ENCODE measurements at regions of chr15 and their contacts with region 1.

Region 1: DNA sequence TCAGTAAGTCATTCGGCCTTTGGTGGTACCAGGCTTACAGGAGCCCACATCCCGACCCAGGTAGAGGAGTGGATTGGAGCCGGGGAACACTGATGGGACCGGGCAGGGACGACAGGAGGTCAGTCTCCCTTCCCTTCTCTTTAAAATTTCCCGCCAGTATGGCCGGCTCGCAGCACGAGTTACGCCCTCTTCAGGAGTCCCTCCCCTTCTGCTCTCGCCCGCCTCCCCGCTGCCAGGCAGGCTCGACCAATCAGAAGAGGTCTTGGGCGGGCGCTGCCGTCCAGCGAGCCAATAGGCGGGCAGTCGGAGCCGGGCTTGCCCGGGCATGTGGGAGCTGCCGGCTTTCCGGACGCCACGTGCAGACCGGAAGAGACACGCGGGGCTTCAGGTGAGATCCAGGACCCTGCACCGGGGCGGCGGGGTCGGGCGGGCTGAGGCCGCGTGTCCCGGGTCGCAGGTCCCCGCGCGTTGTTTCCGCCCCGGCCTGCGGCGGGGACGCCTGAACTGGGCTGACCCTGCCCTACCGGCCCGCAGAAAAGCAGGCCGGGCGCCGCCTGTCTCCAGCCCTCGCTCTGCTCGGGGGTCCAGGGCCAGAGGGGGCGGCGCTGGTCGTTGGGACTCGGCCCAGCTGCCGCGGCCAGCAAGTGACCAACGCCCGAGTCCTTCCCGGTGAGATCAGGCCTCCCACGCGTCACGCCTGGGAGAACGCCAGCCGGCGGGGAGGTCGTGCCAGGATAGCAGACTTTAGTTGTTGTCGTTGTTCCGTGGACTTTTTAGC is at the start of gene AEN:
- DNase-seq: peak; percentile 92 to 96 (median 95)
- ATAC-seq: peak; percentile 94
- H3K4me3 ChIP-seq: peak within 1 kb of the TSS; percentile 76
- H3K4me3 Mint-ChIP-seq: peak within 1 kb of the TSS; percentile 84 to 97 (median 90)
- H3K27ac ChIP-seq: peak within 1 kb of the TSS; percentile 90
- H3K27ac Mint-ChIP-seq: peak within 1 kb of the TSS; percentile 81 to 100 (median 94)
- H3K4me1 ChIP-seq: peaks cover 33 to 36% of the 10 kb centered on the region in 2 donors
- H3K4me1 Mint-ChIP-seq: peaks cover 23 to 49% (median 44%) of the 10 kb centered on the region in 7 donors
- H3K27me3 ChIP-seq: no peaks in the 10 kb centered on the region
- H3K27me3 Mint-ChIP-seq: peaks cover 0 to 7% (median 0%) of the 10 kb centered on the region in 5 donors
- total RNA-seq, gene AEN: 29.6 to 52.1 (median 44.2) TPM

Region 2: DNA sequence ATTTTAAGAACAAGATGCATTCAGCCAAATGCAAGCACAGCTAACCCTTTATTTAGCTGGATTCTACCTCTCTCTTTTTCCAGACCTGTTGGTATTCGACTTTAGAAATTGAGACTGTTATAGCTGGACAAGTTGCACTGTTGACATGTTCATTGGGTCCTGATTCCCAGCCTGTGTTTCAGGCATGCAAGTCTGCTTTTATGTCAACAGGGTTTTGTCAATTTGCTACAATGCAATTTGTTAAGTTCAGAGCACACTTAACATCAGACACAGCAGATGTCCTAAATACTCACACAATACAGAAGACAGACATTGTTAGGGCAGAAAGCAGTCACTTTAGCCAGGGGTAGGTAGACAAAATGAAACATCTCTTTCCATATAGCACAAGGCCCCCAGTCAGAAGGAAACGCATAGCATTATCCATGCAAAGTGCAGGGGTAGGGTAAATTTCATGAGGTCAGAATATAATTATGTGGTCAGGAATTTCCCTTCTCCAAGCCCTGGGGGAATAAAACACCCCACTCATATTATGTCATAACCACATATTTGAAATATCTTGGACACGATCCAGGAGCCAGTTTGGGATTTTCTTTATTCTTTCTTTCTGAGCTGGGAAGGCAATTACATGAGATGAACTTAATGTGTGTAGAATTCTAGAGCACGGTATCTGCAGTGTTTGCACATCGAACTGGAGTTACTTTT is 868.8 kb before region 1 on chr15:
- CTCF ChIA-PET with region 1: no interaction called
- POLR2A ChIA-PET with region 1: no interaction called
- intact Hi-C with region 1: no loop called
- DNase-seq: no peak
- ATAC-seq: no peak
- H3K4me3 ChIP-seq: no peak overlapping the region
- H3K4me3 Mint-ChIP-seq: no peak overlapping the region
- H3K27ac ChIP-seq: no peak overlapping the region
- H3K27ac Mint-ChIP-seq: no peak overlapping the region
- H3K4me1 ChIP-seq: no peaks in the 10 kb centered on the region
- H3K4me1 Mint-ChIP-seq: peaks cover 0 to 14% (median 3%) of the 10 kb centered on the region in 7 donors
- H3K27me3 ChIP-seq: no peaks in the 10 kb centered on the region
- H3K27me3 Mint-ChIP-seq: peaks cover 0 to 10% (median 0%) of the 10 kb centered on the region in 5 donors

Region 3: DNA sequence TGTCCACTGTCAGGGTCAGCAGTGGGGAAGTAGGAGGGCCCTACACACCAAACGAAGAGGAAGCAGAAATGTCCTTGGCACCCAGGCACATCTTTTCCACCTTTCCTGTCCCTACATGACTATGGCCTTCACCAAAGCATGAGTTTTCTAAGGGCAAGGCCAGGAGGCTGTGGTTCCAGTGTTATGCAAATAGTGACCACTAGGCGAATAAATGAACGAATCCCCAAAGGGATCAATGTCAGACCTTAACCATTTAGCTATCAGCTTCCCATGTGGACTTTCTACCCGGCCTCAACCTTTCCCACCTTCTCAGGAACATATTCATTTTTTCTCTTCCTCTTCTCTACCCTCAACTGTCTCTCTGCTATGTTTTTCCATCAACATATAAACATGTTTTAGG is 427.8 kb before region 1 on chr15:
- CTCF ChIA-PET with region 1: no interaction called
- POLR2A ChIA-PET with region 1: no interaction called
- intact Hi-C with region 1: no loop called
- DNase-seq: no peak
- ATAC-seq: no peak
- H3K4me3 ChIP-seq: no peak overlapping the region
- H3K4me3 Mint-ChIP-seq: no peak overlapping the region
- H3K27ac ChIP-seq: no peak overlapping the region
- H3K27ac Mint-ChIP-seq: no peak overlapping the region
- H3K4me1 ChIP-seq: no peaks in the 10 kb centered on the region
- H3K4me1 Mint-ChIP-seq: no peaks in the 10 kb centered on the region
- H3K27me3 ChIP-seq: no peaks in the 10 kb centered on the region
- H3K27me3 Mint-ChIP-seq: peaks cover 0 to 27% (median 21%) of the 10 kb centered on the region in 5 donors

Region 4: DNA sequence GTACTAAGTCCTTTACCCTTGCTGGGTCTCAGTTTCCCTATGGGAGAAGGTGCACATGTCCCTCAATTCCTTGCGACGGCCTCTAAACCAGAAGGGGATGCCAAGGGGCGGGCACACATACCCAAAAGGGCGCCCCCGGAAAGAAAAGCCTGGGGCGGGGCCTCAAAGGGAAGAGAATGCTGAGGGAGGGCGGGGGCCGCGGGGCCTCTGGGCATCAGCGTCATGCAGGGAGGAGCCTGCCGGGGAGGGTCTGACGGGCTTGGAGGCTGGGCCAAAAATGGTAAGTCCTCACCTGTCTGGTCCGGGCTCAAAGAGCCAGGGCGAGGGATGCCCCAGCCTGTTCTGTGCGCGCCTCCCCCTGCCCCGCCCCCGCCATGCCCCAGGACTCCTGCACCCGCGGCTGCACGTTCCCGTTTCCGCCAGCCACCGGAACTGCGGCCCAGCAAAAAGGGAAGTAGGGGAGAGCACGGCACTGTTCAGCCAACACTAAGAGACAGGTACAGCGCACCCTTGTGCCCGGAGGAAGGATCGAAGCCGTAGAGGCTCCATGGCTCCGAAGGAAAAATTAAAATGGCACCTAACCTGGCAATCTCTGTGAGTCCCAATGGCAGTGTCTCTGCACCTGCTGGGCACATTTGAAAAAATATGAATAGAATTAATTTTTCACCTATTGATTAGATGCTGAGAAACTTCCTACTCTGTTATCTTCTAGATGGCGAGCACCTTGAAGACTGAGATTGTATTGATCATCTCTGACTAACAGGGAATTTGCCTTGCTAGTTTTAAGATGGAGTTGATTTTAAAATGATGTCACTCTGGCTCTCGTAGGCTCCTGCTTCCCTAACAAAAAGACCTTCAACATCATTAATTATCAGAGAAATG is 74.7 kb before region 1 on chr15 and contains the start of gene DET1:
- CTCF ChIA-PET with region 1: no interaction called
- POLR2A ChIA-PET with region 1: no interaction called
- intact Hi-C with region 1: loop called (anchors 1 kb)
- DNase-seq: peak; percentile 75 to 94 (median 92)
- ATAC-seq: peak; percentile 97
- H3K4me3 ChIP-seq: peak within 1 kb of the TSS; percentile 66
- H3K4me3 Mint-ChIP-seq: peak within 1 kb of the TSS; percentile 80 to 96 (median 90)
- H3K27ac ChIP-seq: peak within 1 kb of the TSS; percentile 81
- H3K27ac Mint-ChIP-seq: peak within 1 kb of the TSS; percentile 85 to 97 (median 92)
- H3K4me1 ChIP-seq: peaks cover 0 to 5% of the 10 kb centered on the region in 2 donors
- H3K4me1 Mint-ChIP-seq: peaks cover 9 to 24% (median 14%) of the 10 kb centered on the region in 7 donors
- H3K27me3 ChIP-seq: no peaks in the 10 kb centered on the region
- H3K27me3 Mint-ChIP-seq: no peaks in the 10 kb centered on the region
- total RNA-seq, gene DET1: 4.5 to 16.5 (median 8.4) TPM

Region 5: GRCh38 chr15:88590759-88591158 is 30.4 kb before region 1 on chr15:
- CTCF ChIA-PET with region 1: no interaction called
- POLR2A ChIA-PET with region 1: no interaction called
- intact Hi-C with region 1: no loop called
- DNase-seq: no peak
- ATAC-seq: no peak
- H3K4me3 ChIP-seq: no peak overlapping the region
- H3K4me3 Mint-ChIP-seq: no peak overlapping the region
- H3K27ac ChIP-seq: no peak overlapping the region
- H3K27ac Mint-ChIP-seq: no peak overlapping the region
- H3K4me1 ChIP-seq: no peaks in the 10 kb centered on the region
- H3K4me1 Mint-ChIP-seq: peaks cover 0 to 1% (median 0%) of the 10 kb centered on the region in 7 donors
- H3K27me3 ChIP-seq: no peaks in the 10 kb centered on the region
- H3K27me3 Mint-ChIP-seq: peaks cover 0 to 25% (median 3%) of the 10 kb centered on the region in 5 donors

Region 6: DNA sequence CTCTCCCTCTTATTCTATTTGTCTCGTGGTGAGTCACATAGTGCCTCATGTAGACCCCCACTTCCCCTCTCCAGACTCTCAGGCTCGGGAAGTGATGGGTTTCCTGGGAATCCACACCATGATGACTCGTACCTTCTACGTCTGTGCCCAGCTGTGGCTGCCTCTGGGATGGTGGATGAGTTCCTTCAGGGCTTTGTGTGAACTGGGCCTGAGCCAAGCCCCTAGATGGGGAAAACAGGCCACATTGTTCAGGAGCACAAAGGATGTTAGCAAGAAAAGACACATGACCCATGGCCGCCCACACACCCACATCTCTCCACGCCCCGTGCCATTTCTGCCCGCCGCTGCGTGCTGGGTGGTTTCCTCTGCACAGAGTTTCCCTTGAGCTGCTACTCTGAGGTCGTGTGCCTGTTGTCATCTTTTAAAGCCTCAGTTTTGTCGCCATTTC is 28.1 kb after region 1 on chr15:
- CTCF ChIA-PET with region 1: interaction called, 8 read pairs
- POLR2A ChIA-PET with region 1: interaction called, 12 read pairs
- intact Hi-C with region 1: no loop called
- DNase-seq: peak in 8 of 9 donors; percentile 44 to 70 (median 60)
- ATAC-seq: peak; percentile 85
- H3K4me3 ChIP-seq: peak overlapping the region; percentile 23
- H3K4me3 Mint-ChIP-seq: peak overlapping the region; percentile 73 to 94 (median 83)
- H3K27ac ChIP-seq: peak overlapping the region; percentile 76
- H3K27ac Mint-ChIP-seq: peak overlapping the region; percentile 92 to 99 (median 97)
- H3K4me1 ChIP-seq: peaks cover 34 to 80% of the 10 kb centered on the region in 2 donors
- H3K4me1 Mint-ChIP-seq: peaks cover 54 to 96% (median 88%) of the 10 kb centered on the region in 7 donors
- H3K27me3 ChIP-seq: no peaks in the 10 kb centered on the region
- H3K27me3 Mint-ChIP-seq: no peaks in the 10 kb centered on the region

Region 7: GRCh38 chr15:88690331-88690730 is 69.1 kb after region 1 on chr15:
- CTCF ChIA-PET with region 1: no interaction called
- POLR2A ChIA-PET with region 1: no interaction called
- intact Hi-C with region 1: no loop called
- DNase-seq: no peak
- ATAC-seq: no peak
- H3K4me3 ChIP-seq: no peak overlapping the region
- H3K4me3 Mint-ChIP-seq: no peak overlapping the region
- H3K27ac ChIP-seq: no peak overlapping the region
- H3K27ac Mint-ChIP-seq: no peak overlapping the region
- H3K4me1 ChIP-seq: no peaks in the 10 kb centered on the region
- H3K4me1 Mint-ChIP-seq: no peaks in the 10 kb centered on the region
- H3K27me3 ChIP-seq: no peaks in the 10 kb centered on the region
- H3K27me3 Mint-ChIP-seq: peaks cover 6 to 28% (median 17%) of the 10 kb centered on the region in 5 donors

Region 8: DNA sequence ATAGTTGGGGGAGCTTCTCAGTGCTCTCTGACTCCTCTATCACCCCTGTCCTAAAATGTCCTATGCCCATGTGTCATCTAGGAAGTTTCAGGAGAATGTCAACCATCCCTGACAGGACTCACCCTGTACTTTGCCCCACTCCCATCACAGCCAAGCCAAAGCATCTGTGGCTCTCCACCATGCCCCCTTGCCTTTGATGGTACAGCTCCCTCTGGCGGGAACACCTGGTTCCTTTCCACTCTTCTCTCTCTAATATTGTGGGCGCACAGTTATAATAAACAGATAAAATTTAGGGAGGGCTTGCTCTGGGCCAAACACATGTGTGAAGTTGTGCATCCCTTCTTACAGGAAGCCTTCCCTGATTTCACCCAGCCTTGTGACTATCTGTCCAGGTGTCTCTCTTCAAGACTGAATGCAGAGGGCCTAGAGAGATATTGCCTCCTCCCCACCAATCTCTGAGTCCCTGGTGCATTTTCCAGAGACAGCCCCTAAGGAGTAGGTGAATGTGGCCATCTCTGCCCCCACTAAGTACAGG is 80.4 kb after region 1 on chr15:
- CTCF ChIA-PET with region 1: no interaction called
- POLR2A ChIA-PET with region 1: no interaction called
- intact Hi-C with region 1: loop called in 1 of 2 experiments (anchors 1 kb)
- DNase-seq: peak in 1 of 9 donors; percentile 5
- ATAC-seq: no peak
- H3K4me3 ChIP-seq: no peak overlapping the region
- H3K4me3 Mint-ChIP-seq: no peak overlapping the region
- H3K27ac ChIP-seq: no peak overlapping the region
- H3K27ac Mint-ChIP-seq: no peak overlapping the region
- H3K4me1 ChIP-seq: peaks cover 0 to 7% of the 10 kb centered on the region in 2 donors
- H3K4me1 Mint-ChIP-seq: peaks cover 10 to 31% (median 13%) of the 10 kb centered on the region in 7 donors
- H3K27me3 ChIP-seq: no peaks in the 10 kb centered on the region
- H3K27me3 Mint-ChIP-seq: peaks cover 15 to 48% (median 29%) of the 10 kb centered on the region in 5 donors

Region 9: DNA sequence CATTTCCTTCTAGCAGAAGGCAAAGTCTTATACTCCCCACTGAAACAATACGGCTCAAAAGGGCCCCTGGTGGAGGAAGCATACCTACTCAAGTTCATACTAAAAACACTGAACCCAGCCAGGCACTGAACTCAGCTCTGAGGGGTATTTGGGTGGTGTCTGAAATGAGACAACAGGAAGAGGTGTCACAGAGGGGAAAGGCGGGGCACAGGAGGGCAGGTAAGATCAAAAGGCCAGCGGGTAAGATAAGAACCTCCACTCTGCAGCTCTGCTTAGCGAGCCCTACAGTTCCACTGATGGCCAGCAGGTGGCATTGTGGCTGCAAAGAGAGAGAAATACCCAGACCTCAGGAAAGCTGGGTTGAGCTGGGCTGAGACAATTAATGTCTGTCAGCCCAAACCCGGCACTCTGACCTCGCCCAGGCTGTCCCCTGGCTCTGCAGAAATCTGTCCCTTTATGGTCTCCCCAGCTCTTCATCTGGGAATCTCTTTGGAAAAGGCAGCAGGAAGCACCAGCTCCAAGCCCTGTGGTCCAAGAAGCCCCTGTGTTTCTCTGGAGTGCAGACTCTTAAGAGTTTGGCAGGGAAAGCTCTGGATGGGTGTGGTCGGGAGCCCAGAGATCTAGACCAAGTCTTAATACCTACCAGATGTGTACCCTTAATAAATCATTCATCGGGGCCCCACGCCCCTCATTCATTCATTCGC is 283.6 kb after region 1 on chr15:
- CTCF ChIA-PET with region 1: interaction called, 12 read pairs
- POLR2A ChIA-PET with region 1: interaction called, 3 read pairs
- intact Hi-C with region 1: loop called in 1 of 2 experiments (anchors 1 kb)
- DNase-seq: peak; percentile 79 to 99 (median 98)
- ATAC-seq: peak; percentile 99
- H3K4me3 ChIP-seq: no peak overlapping the region
- H3K4me3 Mint-ChIP-seq: peak overlapping the region; percentile 16 to 78 (median 54)
- H3K27ac ChIP-seq: peak overlapping the region; percentile 70
- H3K27ac Mint-ChIP-seq: peak overlapping the region; percentile 76 to 98 (median 94)
- H3K4me1 ChIP-seq: peaks cover 19 to 37% of the 10 kb centered on the region in 2 donors
- H3K4me1 Mint-ChIP-seq: peaks cover 23 to 65% (median 52%) of the 10 kb centered on the region in 7 donors
- H3K27me3 ChIP-seq: no peaks in the 10 kb centered on the region
- H3K27me3 Mint-ChIP-seq: no peaks in the 10 kb centered on the region

Region 10: DNA sequence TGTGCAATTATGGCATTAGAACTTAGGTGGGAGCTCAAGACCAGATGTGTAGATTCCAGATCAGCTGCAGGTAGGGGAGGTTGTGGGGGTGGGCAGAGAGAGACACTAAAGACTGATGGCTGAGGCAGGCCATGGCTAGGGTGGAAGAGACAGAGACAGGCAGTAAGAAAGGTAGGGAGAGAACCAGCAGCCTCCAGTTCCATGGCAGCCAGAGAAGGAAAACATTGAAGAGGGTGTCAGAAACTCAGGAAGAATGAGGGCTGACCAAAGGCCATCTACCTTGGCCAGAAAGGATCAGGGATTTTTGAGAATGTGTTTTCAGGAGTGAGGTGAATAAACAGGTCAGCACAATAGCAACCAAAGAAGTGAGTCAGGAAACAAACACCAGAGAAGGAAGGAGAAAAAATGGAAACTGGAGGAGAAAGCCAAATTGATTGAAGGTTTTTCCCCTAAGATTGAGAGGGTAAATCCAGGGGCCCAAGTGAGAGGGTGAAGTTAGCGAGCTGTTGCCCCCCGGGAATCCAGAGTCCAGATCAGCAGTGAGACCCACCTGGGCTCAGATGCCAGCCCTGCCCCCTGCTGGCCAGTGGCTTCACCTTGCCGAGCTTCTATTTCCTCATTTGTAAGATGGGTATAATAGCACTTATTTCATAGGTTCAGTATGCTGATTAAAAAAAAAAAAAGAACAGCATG is 508.1 kb after region 1 on chr15:
- CTCF ChIA-PET with region 1: no interaction called
- POLR2A ChIA-PET with region 1: no interaction called
- intact Hi-C with region 1: loop called in 1 of 2 experiments (anchors 5 kb)
- DNase-seq: peak; percentile 23 to 54 (median 45)
- ATAC-seq: peak; percentile 39
- H3K4me3 ChIP-seq: no peak overlapping the region
- H3K4me3 Mint-ChIP-seq: no peak overlapping the region
- H3K27ac ChIP-seq: no peak overlapping the region
- H3K27ac Mint-ChIP-seq: no peak overlapping the region
- H3K4me1 ChIP-seq: peaks cover 10 to 17% of the 10 kb centered on the region in 2 donors
- H3K4me1 Mint-ChIP-seq: peaks cover 10 to 33% (median 17%) of the 10 kb centered on the region in 7 donors
- H3K27me3 ChIP-seq: no peaks in the 10 kb centered on the region
- H3K27me3 Mint-ChIP-seq: no peaks in the 10 kb centered on the region

Measured in naive thymus-derived CD4-positive, alpha-beta T cell (primary cell).